Naive thymus-derived CD4-positive, alpha-beta T cell (primary cell): ENCODE measurements at regions of chr2 and their contacts with region 1.

Region 1: GRCh38 chr2:112254466-112255239 is at the start of gene ZC3H8:
- DNase-seq: peak; percentile 92 to 98 (median 97)
- ATAC-seq: peak; percentile 95
- H3K4me3 ChIP-seq: peak within 1 kb of the TSS; percentile 74
- H3K4me3 Mint-ChIP-seq: peak within 1 kb of the TSS in 9 of 10 donors; percentile 84 to 92 (median 90)
- H3K27ac ChIP-seq: peak within 1 kb of the TSS; percentile 90
- H3K27ac Mint-ChIP-seq: peak within 1 kb of the TSS; percentile 80 to 97 (median 94)
- H3K4me1 ChIP-seq: peaks cover 13 to 19% of the 10 kb centered on the region in 2 donors
- H3K4me1 Mint-ChIP-seq: peaks cover 5 to 32% (median 15%) of the 10 kb centered on the region in 7 donors
- H3K27me3 ChIP-seq: no peaks in the 10 kb centered on the region
- H3K27me3 Mint-ChIP-seq: peaks cover 0 to 3% (median 0%) of the 10 kb centered on the region in 5 donors
- total RNA-seq, gene ZC3H8: 8.8 to 23.6 (median 17.2) TPM

Region 2: GRCh38 chr2:111883661-111884591 is 370.7 kb before region 1 on chr2 and contains the start of gene ANAPC1:
- CTCF ChIA-PET with region 1: no interaction called
- POLR2A ChIA-PET with region 1: no interaction called
- intact Hi-C with region 1: loop called (anchors 5 to 10 kb)
- DNase-seq: peak; percentile 75 to 87 (median 84)
- ATAC-seq: peak; percentile 98
- H3K4me3 ChIP-seq: peak within 1 kb of the TSS; percentile 69
- H3K4me3 Mint-ChIP-seq: peak within 1 kb of the TSS; percentile 92 to 99 (median 96)
- H3K27ac ChIP-seq: peak within 1 kb of the TSS; percentile 85
- H3K27ac Mint-ChIP-seq: peak within 1 kb of the TSS; percentile 92 to 98 (median 96)
- H3K4me1 ChIP-seq: peaks cover 0 to 10% of the 10 kb centered on the region in 2 donors
- H3K4me1 Mint-ChIP-seq: peaks cover 2 to 26% (median 13%) of the 10 kb centered on the region in 7 donors
- H3K27me3 ChIP-seq: no peaks in the 10 kb centered on the region
- H3K27me3 Mint-ChIP-seq: no peaks in the 10 kb centered on the region
- total RNA-seq, gene ANAPC1: 51.8 to 77.2 (median 62.7) TPM

Region 3: DNA sequence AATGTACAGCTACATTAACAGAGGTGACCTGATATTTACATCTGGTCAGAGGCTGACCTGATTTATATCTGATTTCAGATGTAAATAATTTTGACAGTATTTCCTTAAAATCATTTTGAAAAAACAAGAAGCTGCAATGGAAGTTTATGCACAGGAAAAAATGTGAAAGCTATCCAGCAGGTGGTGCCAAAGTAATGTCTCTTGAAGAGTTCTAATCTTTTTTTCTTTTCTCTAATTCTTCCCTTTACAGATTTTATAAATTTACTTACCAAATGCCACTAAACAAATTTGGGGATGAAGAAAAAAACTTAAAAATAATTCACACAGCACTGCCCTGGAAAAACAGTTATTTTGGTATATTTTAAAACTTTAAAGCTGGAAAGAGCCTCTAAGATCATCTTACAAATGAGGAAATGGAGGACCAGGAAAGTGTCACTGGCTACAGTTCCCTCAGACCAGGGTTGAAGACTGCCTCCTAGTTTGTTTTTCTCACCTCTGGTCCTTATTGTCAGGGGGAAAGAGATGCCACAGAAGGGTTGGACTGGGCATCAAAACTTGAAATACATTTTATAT is 132.9 kb before region 1 on chr2:
- CTCF ChIA-PET with region 1: interaction called, 7 read pairs
- POLR2A ChIA-PET with region 1: interaction called, 10 read pairs
- intact Hi-C with region 1: loop called (anchors 1 kb)
- DNase-seq: peak in 7 of 9 donors; percentile 33 to 68 (median 56)
- ATAC-seq: no peak
- H3K4me3 ChIP-seq: no peak overlapping the region
- H3K4me3 Mint-ChIP-seq: no peak overlapping the region
- H3K27ac ChIP-seq: no peak overlapping the region
- H3K27ac Mint-ChIP-seq: peak overlapping the region in 3 of 9 donors; percentile 40 to 62 (median 47)
- H3K4me1 ChIP-seq: no peaks in the 10 kb centered on the region
- H3K4me1 Mint-ChIP-seq: peaks cover 0 to 8% (median 0%) of the 10 kb centered on the region in 7 donors
- H3K27me3 ChIP-seq: no peaks in the 10 kb centered on the region
- H3K27me3 Mint-ChIP-seq: no peaks in the 10 kb centered on the region

Region 4: DNA sequence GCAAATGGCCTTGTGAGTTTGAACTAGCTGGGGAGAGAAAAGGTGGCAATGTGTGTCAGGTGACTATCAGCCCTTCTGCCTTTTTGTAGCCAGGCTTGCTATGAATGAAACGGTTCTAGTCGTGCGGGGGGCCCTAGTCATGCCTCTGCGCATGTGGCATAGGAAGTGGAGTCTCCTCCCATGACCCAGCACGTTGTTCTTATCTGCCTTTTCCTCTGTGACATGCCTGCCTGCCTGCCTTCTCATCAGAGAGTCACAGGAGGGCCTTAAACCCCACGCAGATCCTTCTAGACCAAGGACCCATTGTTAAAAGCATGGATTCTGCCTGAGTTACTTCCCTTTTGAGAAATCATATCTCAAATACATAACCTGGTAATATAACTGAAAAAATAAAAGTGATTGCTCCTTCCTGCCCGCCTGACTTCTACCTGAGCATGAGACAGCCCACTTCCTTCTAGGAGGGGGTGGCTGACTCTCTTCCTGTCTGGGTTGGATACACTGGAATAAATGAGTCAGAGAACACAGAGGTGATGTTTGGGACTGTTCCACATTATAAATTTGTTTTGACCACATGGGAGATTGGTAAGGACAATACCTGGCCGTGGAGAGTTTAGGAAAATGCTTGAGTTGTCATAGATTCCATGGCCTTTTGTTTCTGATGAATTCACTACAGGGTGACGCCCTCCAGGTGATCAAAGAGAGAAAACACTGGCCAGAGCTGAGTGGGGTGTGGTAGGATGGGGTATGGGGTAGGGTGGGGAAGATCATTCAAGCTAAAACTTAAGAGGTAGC is 66.7 kb before region 1 on chr2:
- CTCF ChIA-PET with region 1: no interaction called
- POLR2A ChIA-PET with region 1: interaction called, 69 read pairs
- intact Hi-C with region 1: loop called (anchors 1 kb)
- DNase-seq: peak in 8 of 9 donors; percentile 69 to 95 (median 88)
- ATAC-seq: peak; percentile 90
- H3K4me3 ChIP-seq: peak overlapping the region; percentile 31
- H3K4me3 Mint-ChIP-seq: peak overlapping the region; percentile 58 to 88 (median 74)
- H3K27ac ChIP-seq: peak overlapping the region; percentile 85
- H3K27ac Mint-ChIP-seq: peak overlapping the region; percentile 92 to 100 (median 99)
- H3K4me1 ChIP-seq: peaks cover 21 to 80% of the 10 kb centered on the region in 2 donors
- H3K4me1 Mint-ChIP-seq: peaks cover 59 to 96% (median 94%) of the 10 kb centered on the region in 7 donors
- H3K27me3 ChIP-seq: no peaks in the 10 kb centered on the region
- H3K27me3 Mint-ChIP-seq: no peaks in the 10 kb centered on the region

Region 5: DNA sequence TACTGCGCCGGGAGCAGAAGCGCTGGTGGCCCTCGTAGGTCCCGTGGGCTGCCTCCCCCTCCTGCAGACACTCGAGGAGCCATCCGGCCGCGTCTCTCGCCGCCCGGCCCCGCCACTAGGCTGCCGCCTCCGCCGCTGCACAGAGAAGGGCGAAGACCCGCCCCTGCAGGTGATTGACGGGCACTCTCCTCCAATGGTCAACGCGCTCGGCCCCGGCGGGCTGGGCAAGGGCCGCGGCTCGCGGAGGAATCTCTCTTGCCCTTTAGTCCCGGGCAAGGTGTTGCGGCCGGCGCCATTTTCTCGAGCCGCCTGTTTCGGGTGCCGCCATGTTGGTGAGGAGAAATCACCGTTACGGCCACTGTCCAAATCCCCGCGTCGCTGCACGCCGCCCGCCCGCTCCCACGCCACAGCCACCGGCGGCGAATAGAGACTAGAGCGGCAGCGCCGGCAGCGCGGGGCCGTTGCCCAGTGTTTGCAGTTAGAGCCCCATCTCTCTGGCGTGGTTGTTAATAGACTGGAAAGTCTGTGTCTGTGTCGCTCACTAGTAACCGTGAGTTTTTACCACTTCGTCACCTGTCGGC is 20.7 kb after region 1 on chr2 and contains the start of gene ZC3H6:
- CTCF ChIA-PET with region 1: interaction called, 3 read pairs
- POLR2A ChIA-PET with region 1: interaction called, 22 read pairs
- intact Hi-C with region 1: loop called (anchors 1 kb)
- DNase-seq: peak; percentile 96 to 100 (median 100)
- ATAC-seq: peak; percentile 98
- H3K4me3 ChIP-seq: peak within 1 kb of the TSS; percentile 99
- H3K4me3 Mint-ChIP-seq: peak within 1 kb of the TSS; percentile 85 to 95 (median 94)
- H3K27ac ChIP-seq: peak within 1 kb of the TSS; percentile 100
- H3K27ac Mint-ChIP-seq: peak within 1 kb of the TSS; percentile 90 to 99 (median 98)
- H3K4me1 ChIP-seq: peaks cover 14 to 18% of the 10 kb centered on the region in 2 donors
- H3K4me1 Mint-ChIP-seq: peaks cover 9 to 36% (median 25%) of the 10 kb centered on the region in 7 donors
- H3K27me3 ChIP-seq: no peaks in the 10 kb centered on the region
- H3K27me3 Mint-ChIP-seq: peaks cover 0 to 3% (median 0%) of the 10 kb centered on the region in 5 donors
- total RNA-seq, gene ZC3H6: 11.8 to 42.1 (median 23.7) TPM

Region 6: GRCh38 chr2:112542123-112542983 is 287.7 kb after region 1 on chr2 and contains the start of gene POLR1B:
- CTCF ChIA-PET with region 1: no interaction called
- POLR2A ChIA-PET with region 1: no interaction called
- intact Hi-C with region 1: loop called (anchors 2 kb)
- DNase-seq: peak in 8 of 9 donors; percentile 57 to 81 (median 77)
- ATAC-seq: peak; percentile 88
- H3K4me3 ChIP-seq: peak within 1 kb of the TSS; percentile 95
- H3K4me3 Mint-ChIP-seq: no peak within 1 kb of the TSS
- H3K27ac ChIP-seq: peak within 1 kb of the TSS; percentile 89
- H3K27ac Mint-ChIP-seq: peak within 1 kb of the TSS in 1 of 9 donors; percentile 98
- H3K4me1 ChIP-seq: peaks cover 14 to 15% of the 10 kb centered on the region in 2 donors
- H3K4me1 Mint-ChIP-seq: peaks cover 12 to 24% (median 19%) of the 10 kb centered on the region in 7 donors
- H3K27me3 ChIP-seq: no peaks in the 10 kb centered on the region
- H3K27me3 Mint-ChIP-seq: no peaks in the 10 kb centered on the region
- total RNA-seq, gene POLR1B: 10.1 to 41.8 (median 25.2) TPM